H1 (cell line): ENCODE measurements at regions of chr9 and their contacts with region 1.

Region 1: DNA sequence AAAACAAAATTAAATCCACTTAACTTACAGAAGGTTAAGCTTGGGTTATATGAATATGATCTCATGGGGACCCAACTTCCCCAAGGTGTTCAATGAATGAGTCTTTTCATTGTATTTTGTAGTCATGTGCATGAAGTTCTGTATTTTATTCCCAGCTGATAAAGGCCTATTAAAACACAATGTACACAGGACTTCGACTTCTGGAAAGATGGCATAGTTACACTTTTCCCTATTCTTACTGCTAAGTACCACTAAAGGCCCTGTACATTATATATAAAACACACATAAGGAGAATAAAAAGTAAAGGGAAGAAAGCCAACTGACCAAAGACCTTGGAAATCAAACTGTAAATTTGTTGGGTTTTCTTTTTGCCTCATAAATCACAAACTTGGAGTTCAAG is 222.4 kb downstream of the SAXO1 start:
- DNase-seq: no peak
- H3K4me3 ChIP-seq: no peak overlapping the region
- H3K27ac ChIP-seq: no peak overlapping the region
- H3K4me1 ChIP-seq: peaks cover under 1 to 3% (median 2%) of the 10 kb centered on the region in 4 experiments; a peak in 3 of 7 replicates
- H3K27me3 ChIP-seq: no peaks in the 10 kb centered on the region
- CTCF ChIP-seq: no peak
- EP300 ChIP-seq: no peak
- POLR2A ChIP-seq: no peak
- RAD21 ChIP-seq: no peak

Region 2: DNA sequence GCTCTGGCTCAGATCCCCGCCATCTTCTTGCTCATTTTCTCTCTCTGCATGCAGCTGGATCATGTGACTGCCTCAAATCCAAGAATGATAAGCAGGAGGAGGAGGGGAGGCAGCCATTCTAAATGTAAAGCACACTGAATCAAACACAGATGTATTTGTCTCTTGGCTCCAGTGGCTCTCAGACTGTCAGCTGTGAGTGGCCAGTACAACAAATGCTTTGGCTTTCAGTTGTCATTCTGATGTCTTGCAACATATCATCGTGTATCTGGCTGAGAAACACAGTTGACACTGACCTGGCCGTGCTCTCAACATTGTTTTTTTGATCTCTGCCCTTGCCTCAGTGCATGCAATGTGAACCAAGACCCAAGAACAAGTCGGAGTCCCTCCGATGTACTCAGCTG is 103.5 kb before region 1 on chr9:
- CTCF ChIA-PET with region 1: no interaction called
- POLR2A ChIA-PET with region 1: no interaction called
- DNase-seq: no peak
- H3K4me3 ChIP-seq: no peak overlapping the region
- H3K27ac ChIP-seq: no peak overlapping the region
- H3K4me1 ChIP-seq: no peaks in the 10 kb centered on the region
- H3K27me3 ChIP-seq: no peaks in the 10 kb centered on the region
- CTCF ChIP-seq: no peak
- EP300 ChIP-seq: no peak
- POLR2A ChIP-seq: no peak
- RAD21 ChIP-seq: no peak

Region 3: DNA sequence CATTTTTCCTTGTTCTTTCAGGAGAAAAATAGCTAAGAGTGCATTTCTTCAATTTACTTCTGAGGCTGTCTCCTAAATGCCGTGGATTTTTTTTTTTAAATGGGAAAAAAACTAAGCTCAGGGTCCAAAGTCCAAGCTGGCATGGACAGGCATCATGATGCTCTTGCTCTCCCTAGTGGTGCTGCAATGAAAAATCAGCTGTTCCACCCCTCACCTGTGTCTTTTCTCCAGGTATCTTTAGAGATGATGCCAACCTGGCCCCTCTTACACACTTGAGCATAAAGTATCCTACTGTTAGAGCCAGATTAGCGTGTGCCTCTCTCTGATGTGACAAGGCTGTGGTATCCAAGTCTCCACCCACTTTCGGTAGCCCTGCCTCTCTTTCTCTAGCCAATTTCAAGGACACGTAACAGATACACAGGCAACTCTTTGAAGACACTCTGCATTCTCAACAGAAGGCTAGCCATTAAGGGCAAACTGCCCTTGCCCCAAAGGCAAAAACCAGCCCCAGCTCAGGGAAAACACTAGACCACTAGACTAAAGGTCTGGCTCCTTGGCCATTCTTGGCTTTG is 13.6 kb after region 1 on chr9:
- CTCF ChIA-PET with region 1: interaction called, 12 read pairs
- POLR2A ChIA-PET with region 1: no interaction called
- DNase-seq: no peak
- H3K4me3 ChIP-seq: no peak overlapping the region
- H3K27ac ChIP-seq: no peak overlapping the region
- H3K4me1 ChIP-seq: peaks cover 0 to 6% (median 2%) of the 10 kb centered on the region in 4 experiments; a peak in 3 of 7 replicates
- H3K27me3 ChIP-seq: no peaks in the 10 kb centered on the region
- CTCF ChIP-seq: peak; percentile 49 to 63 (median 54)
- EP300 ChIP-seq: no peak
- POLR2A ChIP-seq: no peak
- RAD21 ChIP-seq: peak; percentile 82 to 84

Region 4: GRCh38 chr9:18849890-18850677 is 39.5 kb after region 1 on chr9:
- CTCF ChIA-PET with region 1: no interaction called
- POLR2A ChIA-PET with region 1: no interaction called
- DNase-seq: no peak
- H3K4me3 ChIP-seq: no peak overlapping the region
- H3K27ac ChIP-seq: no peak overlapping the region
- H3K4me1 ChIP-seq: no peaks in the 10 kb centered on the region
- H3K27me3 ChIP-seq: no peaks in the 10 kb centered on the region
- CTCF ChIP-seq: peak in 1 of 3 experiments; percentile 12; a peak in 1 of 4 replicates
- EP300 ChIP-seq: no peak
- POLR2A ChIP-seq: no peak
- RAD21 ChIP-seq: 0 out of 4 replicates have a peak, but pooled peaks of 1 of the 2 experiments have one; percentile 12